Gastrocnemius medialis (tissue), 4 donors: ENCODE measurements at regions of chr12 and their contacts with region 1.

Region 1: GRCh38 chr12:56189176-56189917 is at the start of gene SMARCC2:
- DNase-seq: peak; percentile 77 to 88
- ATAC-seq: peak; percentile 90
- H3K4me3 ChIP-seq: peak within 1 kb of the TSS; percentile 76 to 90 (median 82)
- H3K27ac ChIP-seq: peak within 1 kb of the TSS; percentile 89 to 94 (median 94)
- H3K4me1 ChIP-seq: peaks cover 16 to 28% of the 10 kb centered on the region in 2 donors
- H3K27me3 ChIP-seq: no peaks in the 10 kb centered on the region
- CTCF ChIP-seq: peak; percentile 74 to 88 (median 84)
- POLR2A ChIP-seq: peak; percentile 20 to 41
- total RNA-seq, gene SMARCC2: 34.1 to 56.9 (median 49.4) TPM

Region 2: DNA sequence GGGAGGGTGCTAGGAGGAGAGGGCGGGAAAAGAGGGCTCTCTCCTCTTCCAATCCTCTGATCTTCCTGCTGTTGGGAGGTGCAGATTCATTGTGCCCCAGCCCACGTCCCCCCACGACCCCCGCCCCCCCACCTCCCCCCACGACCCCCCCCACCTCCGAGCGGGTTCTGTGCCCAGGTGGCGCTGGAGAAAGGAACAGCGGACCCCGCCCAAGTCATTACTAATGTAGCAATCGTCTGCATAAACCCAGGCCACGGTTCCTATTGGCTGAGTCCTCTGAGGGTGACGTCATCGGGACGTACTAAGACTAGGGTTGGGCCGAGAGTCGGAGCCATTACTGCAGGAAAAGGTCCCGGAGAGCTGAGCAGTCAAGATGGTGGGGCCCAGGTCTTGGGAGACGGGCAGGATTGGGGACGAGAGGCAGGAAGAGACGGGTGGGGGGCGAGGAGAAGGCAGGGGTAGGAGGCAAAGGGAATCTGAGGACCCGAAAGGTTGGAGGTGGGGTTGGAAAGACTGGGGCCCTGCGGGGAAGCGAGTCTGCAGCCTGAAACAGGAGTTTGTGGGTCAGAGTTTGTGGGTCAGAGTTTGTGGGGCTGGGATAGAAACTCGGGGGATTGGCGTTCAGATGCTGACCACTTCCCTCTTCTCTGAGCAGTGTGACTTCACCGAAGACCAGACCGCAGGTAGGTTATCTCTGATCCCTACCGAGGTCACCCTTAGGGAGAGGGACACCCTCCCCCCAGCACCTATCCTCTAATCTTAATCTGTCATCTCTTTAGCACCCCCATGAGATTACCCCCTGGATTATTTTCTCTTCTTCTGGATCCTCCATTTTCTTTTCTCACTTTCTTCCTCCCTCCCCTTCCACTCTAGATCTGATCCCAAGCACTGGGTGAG is 31.1 kb before region 1 on chr12 and contains the start of gene MYL6:
- in situ Hi-C with region 1: no loop called
- intact Hi-C with region 1: loop called (anchors 2 kb)
- DNase-seq: peak; percentile 97 to 98
- ATAC-seq: peak; percentile 90 to 94
- H3K4me3 ChIP-seq: peak within 1 kb of the TSS; percentile 68 to 93 (median 80)
- H3K27ac ChIP-seq: peak within 1 kb of the TSS; percentile 87 to 97 (median 96)
- H3K4me1 ChIP-seq: peaks cover 35 to 51% of the 10 kb centered on the region in 2 donors
- H3K27me3 ChIP-seq: no peaks in the 10 kb centered on the region
- CTCF ChIP-seq: peak in 1 of 5 experiments; percentile 7
- POLR2A ChIP-seq: peak; percentile 97 to 98
- total RNA-seq, gene MYL6: 159 to 324 (median 202) TPM

Region 3: DNA sequence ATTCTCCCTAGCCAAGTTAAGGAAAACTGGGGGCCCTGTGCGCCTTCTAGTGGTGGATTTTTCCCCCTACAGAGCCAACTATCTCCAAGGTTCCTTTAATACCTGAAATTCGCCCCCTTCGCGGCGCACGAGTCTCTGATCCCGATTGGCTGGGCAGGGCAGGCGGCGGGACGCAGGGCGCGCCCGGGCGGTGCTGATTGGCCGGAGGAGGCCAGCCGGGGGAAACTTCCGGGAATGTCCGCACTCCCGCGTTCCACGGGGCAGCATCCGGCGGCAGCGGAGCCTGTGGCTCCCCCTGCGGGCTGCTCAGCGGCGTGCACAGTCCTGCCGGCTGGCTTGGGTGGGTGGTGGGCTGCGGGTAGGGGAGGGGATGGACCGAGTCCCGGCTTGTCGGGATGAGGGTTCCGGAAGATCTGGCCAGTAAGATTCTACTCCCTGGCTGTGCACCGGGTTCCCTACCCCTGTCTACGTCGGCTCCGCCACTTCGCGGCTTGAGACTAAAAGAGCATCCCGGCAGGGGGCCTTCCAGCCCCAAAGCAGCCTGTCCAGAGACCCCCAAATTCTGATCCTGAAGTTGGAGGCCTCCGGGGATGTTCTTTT is 34.9 kb after region 1 on chr12 and contains the start of gene NABP2:
- in situ Hi-C with region 1: loop called in 1 of 4 experiments (anchors 5 kb)
- intact Hi-C with region 1: loop called (anchors 1 kb)
- DNase-seq: peak; percentile 97 to 99
- ATAC-seq: peak; percentile 79 to 84
- H3K4me3 ChIP-seq: peak within 1 kb of the TSS; percentile 63 to 85 (median 79)
- H3K27ac ChIP-seq: peak within 1 kb of the TSS; percentile 96 to 100 (median 98)
- H3K4me1 ChIP-seq: peaks cover 34 to 45% of the 10 kb centered on the region in 2 donors
- H3K27me3 ChIP-seq: no peaks in the 10 kb centered on the region
- CTCF ChIP-seq: peak; percentile 94 to 96 (median 95)
- POLR2A ChIP-seq: peak in 1 of 2 donors; percentile 25
- total RNA-seq, gene NABP2: 29.6 to 75.0 (median 42.8) TPM

Region 4: DNA sequence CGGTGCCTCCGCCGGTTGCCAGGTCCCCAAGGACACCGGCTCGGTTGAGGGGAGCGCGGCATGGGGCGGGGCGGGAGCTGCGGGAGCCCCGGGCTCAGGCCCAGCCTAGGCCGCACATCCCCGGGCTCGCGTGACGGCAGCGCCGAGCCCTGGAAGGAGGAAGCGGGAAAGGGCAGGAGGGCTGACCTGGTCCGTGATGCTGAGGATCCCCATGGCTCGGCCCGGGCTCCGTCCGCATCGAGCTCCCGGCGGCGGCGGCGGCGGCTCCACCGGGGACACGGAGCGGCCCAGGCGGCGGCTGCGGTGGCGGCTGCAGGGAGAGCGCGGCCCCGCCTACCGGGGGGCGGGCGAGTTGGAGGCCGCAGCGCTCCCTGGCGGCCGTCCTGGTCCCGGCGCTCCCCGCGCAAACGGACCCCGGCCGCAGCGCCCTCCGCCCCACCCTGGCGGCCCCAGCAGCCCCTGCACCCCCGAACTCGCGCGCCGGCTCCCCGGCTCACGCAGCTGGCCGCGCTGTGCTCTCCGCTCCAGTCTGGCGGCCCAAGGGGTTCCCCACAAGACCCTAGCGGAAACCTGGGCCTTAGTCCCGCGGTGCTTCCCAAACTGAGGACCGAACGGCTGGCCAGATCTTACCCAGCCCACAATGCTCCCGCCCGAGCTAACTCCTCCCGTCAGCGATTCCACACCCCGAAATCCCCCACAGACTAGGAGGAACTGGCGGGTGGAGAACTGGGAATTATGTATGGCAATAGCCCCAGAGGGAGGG is 68.9 kb after region 1 on chr12 and contains the start of gene ANKRD52:
- in situ Hi-C with region 1: no loop called
- intact Hi-C with region 1: loop called (anchors 1 kb)
- DNase-seq: peak; percentile 40 to 58
- ATAC-seq: peak; percentile 67 to 79
- H3K4me3 ChIP-seq: peak within 1 kb of the TSS; percentile 71 to 98 (median 79)
- H3K27ac ChIP-seq: peak within 1 kb of the TSS; percentile 89 to 97 (median 91)
- H3K4me1 ChIP-seq: peaks cover 33 to 48% of the 10 kb centered on the region in 2 donors
- H3K27me3 ChIP-seq: no peaks in the 10 kb centered on the region
- CTCF ChIP-seq: peak; percentile 49 to 97 (median 87)
- POLR2A ChIP-seq: peak; percentile 59 to 75
- total RNA-seq, gene ANKRD52: 14.7 to 30.9 (median 18.9) TPM

Region 5: DNA sequence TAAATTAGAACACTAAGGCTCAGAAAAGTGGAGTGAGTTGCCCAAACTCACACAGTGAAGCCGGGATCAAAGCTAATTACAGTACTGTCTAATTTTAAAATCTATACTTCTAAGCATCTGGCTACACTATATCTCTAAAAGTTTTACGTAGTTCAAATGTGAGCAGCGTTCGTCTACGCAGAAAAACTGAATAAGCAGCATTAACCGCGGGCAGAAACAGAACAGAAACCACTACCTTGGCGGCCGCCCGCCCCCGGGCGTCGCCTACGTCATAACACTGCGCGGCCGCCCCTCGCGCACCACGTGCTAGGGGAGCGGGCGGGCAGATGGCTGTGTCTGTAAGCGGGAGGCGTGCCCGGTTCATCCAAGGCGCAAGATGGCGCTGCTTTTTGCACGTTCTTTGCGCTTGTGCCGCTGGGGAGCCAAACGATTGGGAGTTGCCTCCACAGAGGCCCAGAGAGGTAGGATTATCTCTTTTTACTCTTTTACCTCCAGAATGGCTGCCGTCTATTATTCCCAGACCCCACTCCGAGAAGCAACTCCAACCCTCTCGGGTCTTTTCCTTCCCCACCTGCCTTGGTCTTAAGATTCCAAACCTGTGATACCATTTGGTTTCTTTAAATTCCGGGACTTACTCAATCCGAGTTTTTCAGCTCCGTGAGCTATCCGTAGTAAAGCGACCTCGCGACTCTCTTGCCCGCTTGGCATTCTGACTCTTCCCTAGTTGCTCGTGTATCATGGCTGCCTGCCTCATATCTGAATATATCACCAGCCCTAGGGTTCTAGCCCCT is 279.1 kb after region 1 on chr12 and contains the start of gene SPRYD4:
- in situ Hi-C with region 1: loop called in 3 of 4 experiments (anchors 10 to 25 kb)
- intact Hi-C with region 1: loop called (anchors 2 kb)
- DNase-seq: peak; percentile 87 to 91
- ATAC-seq: peak; percentile 91 to 95
- H3K4me3 ChIP-seq: peak within 1 kb of the TSS; percentile 82 to 96 (median 89)
- H3K27ac ChIP-seq: peak within 1 kb of the TSS; percentile 88 to 94 (median 92)
- H3K4me1 ChIP-seq: peaks cover 11 to 13% of the 10 kb centered on the region in 2 donors
- H3K27me3 ChIP-seq: no peaks in the 10 kb centered on the region
- CTCF ChIP-seq: peak in 3 of 5 experiments; percentile 35 to 39 (median 35)
- POLR2A ChIP-seq: peak; percentile 82 to 85
- total RNA-seq, gene SPRYD4: 1.6 to 4.7 (median 2.9) TPM